Lower leg skin (tissue), 4 donors: ENCODE measurements at regions of chr5 and their contacts with region 1.

Region 1: GRCh38 chr5:3249401-3249800 is 346.2 kb upstream of the IRX1 start:
- DNase-seq: no peak
- H3K4me3 ChIP-seq: no peak overlapping the region
- CTCF ChIP-seq: no peak
- POLR2A ChIP-seq: no peak

Region 2: DNA sequence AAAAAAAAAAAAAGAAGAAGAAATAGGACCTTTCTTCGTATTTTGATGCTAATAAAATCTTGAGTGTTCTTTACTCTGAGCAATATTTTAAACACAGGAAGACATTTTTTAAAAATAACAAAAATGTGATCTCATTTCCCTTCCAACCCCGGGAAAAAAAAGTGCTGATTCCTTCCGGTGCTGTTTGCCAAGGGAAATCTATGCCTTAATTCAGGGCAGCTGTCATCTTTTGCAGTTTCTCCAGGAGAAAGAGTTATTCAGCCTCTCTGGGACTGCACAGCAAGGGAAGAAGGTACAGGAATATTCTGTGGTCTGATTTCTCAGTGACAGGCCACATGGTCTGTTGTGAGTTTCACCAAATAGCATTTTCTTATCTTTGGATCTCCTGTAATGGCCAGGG is 54.4 kb after region 1 on chr5:
- intact Hi-C with region 1: no loop called
- DNase-seq: no peak
- H3K4me3 ChIP-seq: no peak overlapping the region
- CTCF ChIP-seq: no peak
- POLR2A ChIP-seq: no peak

Region 3: GRCh38 chr5:3484836-3485235 is 235.4 kb after region 1 on chr5:
- intact Hi-C with region 1: loop called (anchors 5 kb)
- DNase-seq: no peak
- H3K4me3 ChIP-seq: no peak overlapping the region
- CTCF ChIP-seq: no peak
- POLR2A ChIP-seq: no peak

Region 4: GRCh38 chr5:4339949-4340348 is 1090.5 kb after region 1 on chr5:
- intact Hi-C with region 1: loop called (anchors 10 kb)
- DNase-seq: no peak
- H3K4me3 ChIP-seq: no peak overlapping the region
- CTCF ChIP-seq: no peak
- POLR2A ChIP-seq: no peak